ENCODE measurements at regions of chr17 and their contacts with region 1.

Region 1: GRCh38 chr17:79393358-79394202 is 217.3 kb downstream of the RBFOX3 start:
- DNase-seq: peak; percentile 89
- ATAC-seq: peak; percentile 86

Region 2: DNA sequence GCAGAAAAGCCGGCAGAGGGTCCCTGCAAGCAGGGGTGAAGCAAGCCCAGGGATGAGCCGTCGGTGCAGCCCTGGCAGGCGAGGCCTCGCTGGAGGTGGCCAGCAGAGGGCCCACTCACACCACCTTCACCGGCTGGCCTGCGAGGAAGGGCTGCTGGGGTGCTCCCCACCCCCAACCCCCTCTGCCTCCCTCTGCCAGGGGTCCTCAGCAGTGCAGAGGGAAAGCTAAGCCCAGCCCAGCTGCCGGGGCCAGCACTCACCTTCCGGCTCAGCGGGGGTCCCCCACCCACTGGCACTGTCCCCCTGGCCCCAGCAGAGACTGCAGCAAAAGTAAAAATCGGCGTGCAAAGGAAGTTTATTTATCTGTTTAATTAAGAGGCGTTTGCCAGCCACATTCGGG is 205.5 kb before region 1 on chr17:
- intact Hi-C with region 1: loop called (anchors 1 kb)
- DNase-seq: peak; percentile 60
- ATAC-seq: peak; percentile 22

Region 3: GRCh38 chr17:79461041-79461440 is 67.5 kb after region 1 on chr17:
- intact Hi-C with region 1: no loop called
- DNase-seq: no peak
- ATAC-seq: no peak

Region 4: DNA sequence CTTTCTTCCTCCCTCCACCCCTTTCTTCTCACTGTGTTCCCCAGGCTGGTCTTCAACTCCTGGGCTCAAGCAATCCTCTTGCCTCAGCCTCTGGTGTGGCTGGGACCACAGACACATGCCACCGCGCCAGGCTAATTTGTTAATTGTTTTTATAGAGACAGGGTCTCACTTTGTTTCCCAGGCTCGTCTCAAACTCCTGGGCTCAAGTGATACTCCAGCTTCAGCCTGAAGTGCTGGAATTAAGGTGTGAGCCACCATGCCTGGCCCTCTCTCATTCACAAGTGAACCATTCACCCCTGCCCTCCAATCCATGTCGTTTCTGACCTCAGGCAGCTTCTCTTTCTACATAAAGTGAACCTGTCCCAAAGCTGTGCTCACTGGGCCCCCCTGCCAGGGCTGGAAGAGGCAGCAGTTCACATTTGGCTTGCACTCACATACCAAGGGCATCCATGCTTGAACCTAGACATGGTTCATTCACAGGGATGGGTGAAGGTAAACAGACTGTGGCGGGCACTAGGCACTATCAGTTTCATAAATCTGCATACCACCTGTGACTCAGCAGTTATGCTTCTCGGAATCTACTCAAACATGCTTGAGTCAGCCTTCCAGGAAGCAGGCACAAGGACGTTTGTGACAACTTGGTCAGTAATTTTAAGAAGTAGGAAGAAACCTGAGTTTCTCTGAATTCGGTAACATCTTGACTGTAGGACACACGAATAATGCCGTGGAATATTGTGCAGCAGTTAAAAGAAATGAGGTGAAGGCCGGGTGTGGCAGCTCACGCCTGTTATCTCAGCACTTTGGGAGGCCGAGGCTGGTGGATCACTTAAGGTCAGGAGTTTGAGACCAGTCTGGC is 861.0 kb after region 1 on chr17:
- intact Hi-C with region 1: no loop called
- DNase-seq: peak; percentile 60
- ATAC-seq: no peak

Measured in Right ventricle myocardium inferior (tissue), 1 donor.